Cardiac septum (tissue), 1 donor: ENCODE measurements at regions of chr6 and their contacts with region 1.

Region 1: DNA sequence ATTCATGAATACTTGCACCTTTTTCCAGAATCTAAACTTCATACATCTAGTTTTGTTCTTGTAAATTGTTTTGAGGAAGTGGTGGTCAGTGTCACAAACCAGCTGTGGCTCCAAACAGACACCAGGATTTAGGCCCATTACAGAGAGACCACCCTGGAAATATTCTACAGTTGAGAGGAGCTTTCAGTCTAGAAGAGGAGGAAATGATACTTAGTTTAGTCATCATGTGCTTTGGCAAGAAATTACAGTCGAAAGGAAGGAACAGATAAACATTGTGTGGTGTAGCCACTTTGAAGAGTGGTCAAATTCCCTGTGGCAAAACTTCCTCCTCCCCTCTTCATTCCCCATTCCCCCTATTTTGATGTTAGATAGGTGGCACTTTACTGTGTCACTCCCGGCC is 15.7 kb downstream of the DCBLD1 start:
- DNase-seq: no peak

Region 2: GRCh38 chr6:117482240-117483003 is 15.7 kb before region 1 on chr6 and contains the start of gene DCBLD1:
- intact Hi-C with region 1: loop called (anchors 2 kb)
- DNase-seq: peak; percentile 89
- total RNA-seq, gene DCBLD1: 3.8 TPM